Naive thymus-derived CD4-positive, alpha-beta T cell (primary cell): ENCODE measurements at regions of chr10 and their contacts with region 1.

Region 1: GRCh38 chr10:120850911-120851865 is at the start of gene WDR11:
- DNase-seq: peak; percentile 36 to 77 (median 51)
- ATAC-seq: peak; percentile 92
- H3K4me3 ChIP-seq: peak within 1 kb of the TSS; percentile 88
- H3K4me3 Mint-ChIP-seq: peak within 1 kb of the TSS; percentile 93 to 100 (median 97)
- H3K27ac ChIP-seq: peak within 1 kb of the TSS; percentile 82
- H3K27ac Mint-ChIP-seq: peak within 1 kb of the TSS; percentile 91 to 98 (median 97)
- H3K4me1 ChIP-seq: peaks cover 19% of the 10 kb centered on the region in 2 donors
- H3K4me1 Mint-ChIP-seq: peaks cover 30 to 56% (median 53%) of the 10 kb centered on the region in 7 donors
- H3K27me3 ChIP-seq: no peaks in the 10 kb centered on the region
- H3K27me3 Mint-ChIP-seq: no peaks in the 10 kb centered on the region
- total RNA-seq, gene WDR11: 20.5 to 78.1 (median 44.6) TPM

Region 2: GRCh38 chr10:120735773-120736371 is 115.3 kb before region 1 on chr10:
- CTCF ChIA-PET with region 1: no interaction called
- POLR2A ChIA-PET with region 1: no interaction called
- intact Hi-C with region 1: loop called in 1 of 2 experiments (anchors 5 kb)
- DNase-seq: no peak
- ATAC-seq: no peak
- H3K4me3 ChIP-seq: no peak overlapping the region
- H3K4me3 Mint-ChIP-seq: no peak overlapping the region
- H3K27ac ChIP-seq: no peak overlapping the region
- H3K27ac Mint-ChIP-seq: no peak overlapping the region
- H3K4me1 ChIP-seq: no peaks in the 10 kb centered on the region
- H3K4me1 Mint-ChIP-seq: no peaks in the 10 kb centered on the region
- H3K27me3 ChIP-seq: no peaks in the 10 kb centered on the region
- H3K27me3 Mint-ChIP-seq: peaks cover 0 to 19% (median 14%) of the 10 kb centered on the region in 5 donors

Region 3: GRCh38 chr10:120861178-120861855 is 10.1 kb after region 1 on chr10:
- CTCF ChIA-PET with region 1: no interaction called
- POLR2A ChIA-PET with region 1: interaction called, 3 read pairs
- intact Hi-C with region 1: loop called in 1 of 2 experiments (anchors 1 kb)
- DNase-seq: no peak
- ATAC-seq: no peak
- H3K4me3 ChIP-seq: no peak overlapping the region
- H3K4me3 Mint-ChIP-seq: no peak overlapping the region
- H3K27ac ChIP-seq: no peak overlapping the region
- H3K27ac Mint-ChIP-seq: no peak overlapping the region
- H3K4me1 ChIP-seq: no peaks in the 10 kb centered on the region
- H3K4me1 Mint-ChIP-seq: peaks cover 0 to 10% (median 0%) of the 10 kb centered on the region in 7 donors
- H3K27me3 ChIP-seq: no peaks in the 10 kb centered on the region
- H3K27me3 Mint-ChIP-seq: no peaks in the 10 kb centered on the region

Region 4: GRCh38 chr10:121927841-121928527 is 1076.8 kb after region 1 on chr10 and contains the start of gene ATE1:
- CTCF ChIA-PET with region 1: no interaction called
- POLR2A ChIA-PET with region 1: no interaction called
- intact Hi-C with region 1: loop called (anchors 1 kb)
- DNase-seq: peak; percentile 74 to 86 (median 80)
- ATAC-seq: peak; percentile 98
- H3K4me3 ChIP-seq: peak within 1 kb of the TSS; percentile 65
- H3K4me3 Mint-ChIP-seq: peak within 1 kb of the TSS; percentile 88 to 96 (median 92)
- H3K27ac ChIP-seq: peak within 1 kb of the TSS; percentile 96
- H3K27ac Mint-ChIP-seq: peak within 1 kb of the TSS; percentile 79 to 98 (median 94)
- H3K4me1 ChIP-seq: peaks cover 0 to 13% of the 10 kb centered on the region in 2 donors
- H3K4me1 Mint-ChIP-seq: peaks cover 15 to 48% (median 39%) of the 10 kb centered on the region in 7 donors
- H3K27me3 ChIP-seq: no peaks in the 10 kb centered on the region
- H3K27me3 Mint-ChIP-seq: no peaks in the 10 kb centered on the region
- total RNA-seq, gene ATE1: 23.0 to 26.6 (median 26.2) TPM

Region 5: GRCh38 chr10:121974535-121975294 is 1123.5 kb after region 1 on chr10 and contains the start of gene NSMCE4A:
- CTCF ChIA-PET with region 1: no interaction called
- POLR2A ChIA-PET with region 1: no interaction called
- intact Hi-C with region 1: loop called in 1 of 2 experiments (anchors 2 kb)
- DNase-seq: peak; percentile 47 to 81 (median 62)
- ATAC-seq: peak; percentile 90
- H3K4me3 ChIP-seq: peak within 1 kb of the TSS; percentile 86
- H3K4me3 Mint-ChIP-seq: peak within 1 kb of the TSS; percentile 72 to 86 (median 81)
- H3K27ac ChIP-seq: peak within 1 kb of the TSS; percentile 74
- H3K27ac Mint-ChIP-seq: peak within 1 kb of the TSS in 6 of 9 donors; percentile 36 to 77 (median 60)
- H3K4me1 ChIP-seq: peaks cover 6 to 11% of the 10 kb centered on the region in 2 donors
- H3K4me1 Mint-ChIP-seq: peaks cover 15 to 35% (median 22%) of the 10 kb centered on the region in 7 donors
- H3K27me3 ChIP-seq: no peaks in the 10 kb centered on the region
- H3K27me3 Mint-ChIP-seq: no peaks in the 10 kb centered on the region
- total RNA-seq, gene NSMCE4A: 34.7 to 87.2 (median 69.4) TPM